Posterior cingulate gyrus (tissue), 11 donors: ENCODE measurements at regions of chr21 and their contacts with region 1.

Region 1: DNA sequence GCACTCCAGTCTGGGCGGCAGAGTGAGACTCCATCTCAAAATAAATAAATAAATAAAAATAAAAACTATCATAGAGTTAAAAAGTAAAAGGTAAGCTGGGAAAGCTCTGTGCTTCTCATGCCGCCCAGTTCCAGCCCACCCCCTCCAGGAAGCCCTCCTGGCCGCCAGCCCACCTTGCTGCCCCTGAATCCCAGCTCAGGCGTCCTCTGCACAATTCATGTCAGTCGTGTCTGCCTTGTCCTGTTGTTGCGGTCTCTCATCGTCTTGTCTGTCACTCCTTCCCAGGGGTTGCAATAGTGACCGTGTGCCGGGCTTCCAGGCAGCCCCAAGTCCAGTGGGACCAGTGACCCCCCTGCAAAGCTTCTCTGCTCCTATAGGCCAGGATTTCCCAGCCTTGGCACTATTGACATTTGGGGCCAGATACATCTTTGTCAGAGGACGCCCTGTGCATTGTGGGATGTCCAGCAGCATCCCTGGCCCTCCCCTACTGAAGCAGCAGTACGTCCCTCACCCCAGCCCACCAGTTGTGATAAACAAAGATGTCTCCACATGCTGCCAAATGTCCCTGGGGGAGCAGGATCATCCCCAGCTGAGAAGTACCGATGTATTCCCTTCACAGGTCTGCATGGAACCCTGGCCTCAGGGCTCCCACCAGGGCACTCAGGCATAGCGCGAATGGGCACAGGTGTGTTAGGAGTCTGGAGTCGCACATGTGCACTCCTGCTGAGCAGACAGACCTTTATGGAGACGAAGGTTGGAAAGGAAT is 43.9 kb downstream of the RSPH1 start:
- DNase-seq: peak in 2 of 10 donors; percentile 29 to 70

Region 2: GRCh38 chr21:41816220-41817165 is 635.6 kb before region 1 on chr21:
- intact Hi-C with region 1: loop called (anchors 2 kb)
- DNase-seq: peak in 9 of 10 donors; percentile 52 to 95 (median 68)

Region 3: GRCh38 chr21:42145569-42146272 is 306.4 kb before region 1 on chr21:
- intact Hi-C with region 1: loop called (anchors 2 kb)
- DNase-seq: peak; percentile 35 to 96 (median 68)

Region 4: GRCh38 chr21:42171091-42172053 is 280.8 kb before region 1 on chr21:
- intact Hi-C with region 1: no loop called
- DNase-seq: peak in 6 of 10 donors; percentile 52 to 92 (median 66)